CD4-positive, alpha-beta memory T cell (primary cell): ENCODE measurements at regions of chr18 and their contacts with region 1.

Region 1: DNA sequence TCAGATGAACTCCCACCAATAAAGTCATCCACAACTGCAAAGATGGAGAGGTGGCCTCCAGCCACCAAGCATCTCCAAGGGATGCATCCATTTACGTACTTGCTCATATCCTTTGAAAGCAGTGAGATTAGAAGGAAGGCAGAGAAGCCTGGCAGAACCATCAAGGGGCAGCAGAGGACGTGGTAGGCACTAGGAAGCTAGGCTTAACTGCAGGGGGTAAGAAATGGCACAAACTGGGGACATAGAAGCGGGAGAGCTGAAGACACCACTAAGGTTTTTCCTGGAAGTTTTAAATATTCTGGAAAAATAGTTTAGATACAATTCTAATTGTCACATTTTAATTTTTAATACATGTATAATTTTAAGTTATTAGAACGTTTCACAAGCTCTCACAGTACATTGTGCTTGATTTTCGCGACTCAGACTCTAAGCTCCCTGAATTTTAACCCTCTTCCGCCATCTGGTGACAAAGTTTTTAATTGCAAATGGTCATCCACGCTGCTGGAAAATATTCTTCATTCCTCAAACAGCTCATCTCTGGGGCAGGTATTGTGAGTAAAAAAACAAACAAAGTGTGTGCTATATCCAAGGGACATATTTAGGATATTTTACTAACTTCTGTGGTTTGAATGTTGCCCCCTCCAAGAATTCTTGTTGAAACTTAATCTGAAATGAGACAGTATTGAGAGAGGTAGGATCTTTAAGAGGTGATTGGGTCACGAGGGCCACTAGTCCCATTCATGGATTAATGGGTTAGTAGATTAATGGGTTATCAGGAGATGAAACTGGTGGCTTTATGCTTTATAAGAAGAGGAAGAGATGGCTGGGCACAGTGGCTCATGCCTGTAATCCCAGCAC is 1.6 kb upstream of the PSTPIP2 start:
- DNase-seq: peak; percentile 63 to 75 (median 68)
- H3K4me3 ChIP-seq: no peak overlapping the region
- H3K4me3 Mint-ChIP-seq: peak overlapping the region in 7 of 8 donors; percentile 22 to 89 (median 83)
- H3K27ac ChIP-seq: no peak overlapping the region
- H3K27ac Mint-ChIP-seq: peak overlapping the region in 2 of 7 donors; percentile 19 to 76
- H3K4me1 ChIP-seq: peaks cover 43% of the 10 kb centered on the region
- H3K4me1 Mint-ChIP-seq: peaks cover 25 to 42% (median 34%) of the 10 kb centered on the region in 4 donors
- H3K27me3 ChIP-seq: no peaks in the 10 kb centered on the region
- H3K27me3 Mint-ChIP-seq: no peaks in the 10 kb centered on the region

Region 2: DNA sequence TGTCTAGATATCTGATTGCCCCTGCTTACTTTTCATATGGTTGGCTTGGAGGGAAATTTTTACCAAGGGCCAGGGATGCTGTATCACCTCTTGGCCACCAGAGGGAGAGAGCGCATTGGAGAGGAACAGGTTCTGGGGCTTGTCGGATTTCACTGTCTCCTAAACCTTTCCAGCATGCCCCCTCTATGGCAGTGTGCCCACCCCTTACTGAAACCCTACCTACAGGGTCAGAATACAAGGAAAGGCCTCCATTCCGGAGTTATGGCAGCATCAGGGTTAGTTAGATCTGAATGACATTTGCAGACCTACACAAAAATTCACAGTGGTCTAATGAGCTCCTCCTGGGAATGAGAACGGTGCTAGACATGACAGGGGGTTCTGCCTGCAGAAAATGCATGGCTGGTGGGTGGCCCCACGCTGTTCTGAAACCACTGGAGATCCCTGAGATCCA is 452.6 kb before region 1 on chr18:
- CTCF ChIA-PET with region 1: interaction called, 3 read pairs
- POLR2A ChIA-PET with region 1: no interaction called
- intact Hi-C with region 1: loop called (anchors 1 kb)
- DNase-seq: peak in 4 of 5 donors; percentile 38 to 52 (median 46)
- H3K4me3 ChIP-seq: no peak overlapping the region
- H3K4me3 Mint-ChIP-seq: no peak overlapping the region
- H3K27ac ChIP-seq: no peak overlapping the region
- H3K27ac Mint-ChIP-seq: no peak overlapping the region
- H3K4me1 ChIP-seq: no peaks in the 10 kb centered on the region
- H3K4me1 Mint-ChIP-seq: no peaks in the 10 kb centered on the region
- H3K27me3 ChIP-seq: no peaks in the 10 kb centered on the region
- H3K27me3 Mint-ChIP-seq: peaks cover 4 to 7% of the 10 kb centered on the region in 2 donors

Region 3: GRCh38 chr18:45879681-45880655 is 193.7 kb before region 1 on chr18:
- CTCF ChIA-PET with region 1: interaction called, 9 read pairs
- POLR2A ChIA-PET with region 1: interaction called, 7 read pairs
- intact Hi-C with region 1: loop called (anchors 5 kb)
- DNase-seq: peak; percentile 64 to 74 (median 68)
- H3K4me3 ChIP-seq: no peak overlapping the region
- H3K4me3 Mint-ChIP-seq: peak overlapping the region in 1 of 8 donors; percentile 17
- H3K27ac ChIP-seq: no peak overlapping the region
- H3K27ac Mint-ChIP-seq: peak overlapping the region in 5 of 7 donors; percentile 30 to 82 (median 51)
- H3K4me1 ChIP-seq: peaks cover 16% of the 10 kb centered on the region
- H3K4me1 Mint-ChIP-seq: peaks cover 10 to 19% (median 16%) of the 10 kb centered on the region in 4 donors
- H3K27me3 ChIP-seq: no peaks in the 10 kb centered on the region
- H3K27me3 Mint-ChIP-seq: no peaks in the 10 kb centered on the region

Region 4: GRCh38 chr18:45935591-45936335 is 137.9 kb before region 1 on chr18:
- CTCF ChIA-PET with region 1: interaction called, 10 read pairs
- POLR2A ChIA-PET with region 1: no interaction called
- intact Hi-C with region 1: no loop called
- DNase-seq: no peak
- H3K4me3 ChIP-seq: no peak overlapping the region
- H3K4me3 Mint-ChIP-seq: no peak overlapping the region
- H3K27ac ChIP-seq: no peak overlapping the region
- H3K27ac Mint-ChIP-seq: peak overlapping the region in 1 of 7 donors; percentile 19
- H3K4me1 ChIP-seq: peaks cover 21% of the 10 kb centered on the region
- H3K4me1 Mint-ChIP-seq: peaks cover 19 to 25% (median 23%) of the 10 kb centered on the region in 4 donors
- H3K27me3 ChIP-seq: no peaks in the 10 kb centered on the region
- H3K27me3 Mint-ChIP-seq: no peaks in the 10 kb centered on the region

Region 5: GRCh38 chr18:45974088-45974536 is 99.6 kb before region 1 on chr18:
- CTCF ChIA-PET with region 1: interaction called, 47 read pairs
- POLR2A ChIA-PET with region 1: interaction called, 4 read pairs
- intact Hi-C with region 1: loop called (anchors 1 kb)
- DNase-seq: peak; percentile 60 to 80 (median 66)
- H3K4me3 ChIP-seq: no peak overlapping the region
- H3K4me3 Mint-ChIP-seq: peak overlapping the region in 3 of 8 donors; percentile 0 to 34 (median 1)
- H3K27ac ChIP-seq: no peak overlapping the region
- H3K27ac Mint-ChIP-seq: no peak overlapping the region
- H3K4me1 ChIP-seq: peaks cover 8% of the 10 kb centered on the region
- H3K4me1 Mint-ChIP-seq: peaks cover 8 to 18% (median 10%) of the 10 kb centered on the region in 4 donors
- H3K27me3 ChIP-seq: no peaks in the 10 kb centered on the region
- H3K27me3 Mint-ChIP-seq: no peaks in the 10 kb centered on the region

Region 6: DNA sequence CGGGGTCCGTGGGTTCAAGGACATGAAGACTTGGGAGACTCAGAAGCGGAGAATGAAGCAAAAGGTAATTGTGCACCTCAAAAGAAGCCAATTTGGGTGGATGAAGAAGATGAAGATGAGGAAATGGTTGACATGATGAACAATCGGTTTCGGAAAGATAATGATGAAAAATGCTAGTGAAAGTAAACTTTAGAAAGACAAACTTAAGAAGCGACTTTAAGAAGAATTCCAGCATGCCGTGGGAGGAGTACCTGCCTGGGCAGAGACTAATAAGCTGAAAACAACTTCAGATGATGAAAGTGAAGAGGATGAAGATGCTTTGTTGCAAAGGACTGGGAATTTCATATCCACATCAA is 45.2 kb before region 1 on chr18:
- CTCF ChIA-PET with region 1: interaction called, 10 read pairs
- POLR2A ChIA-PET with region 1: interaction called, 17 read pairs
- intact Hi-C with region 1: loop called (anchors 1 kb)
- DNase-seq: no peak
- H3K4me3 ChIP-seq: peak overlapping the region; percentile 20 to 85
- H3K4me3 Mint-ChIP-seq: peak overlapping the region; percentile 92 to 97 (median 92)
- H3K27ac ChIP-seq: peak overlapping the region; percentile 25
- H3K27ac Mint-ChIP-seq: peak overlapping the region; percentile 69 to 92 (median 87)
- H3K4me1 ChIP-seq: peaks cover 6% of the 10 kb centered on the region
- H3K4me1 Mint-ChIP-seq: peaks cover 4 to 12% (median 11%) of the 10 kb centered on the region in 4 donors
- H3K27me3 ChIP-seq: no peaks in the 10 kb centered on the region
- H3K27me3 Mint-ChIP-seq: no peaks in the 10 kb centered on the region

Region 7: GRCh38 chr18:46060359-46060841 is 13.3 kb before region 1 on chr18:
- CTCF ChIA-PET with region 1: interaction called, 30 read pairs
- POLR2A ChIA-PET with region 1: interaction called, 12 read pairs
- intact Hi-C with region 1: no loop called
- DNase-seq: no peak
- H3K4me3 ChIP-seq: no peak overlapping the region
- H3K4me3 Mint-ChIP-seq: no peak overlapping the region
- H3K27ac ChIP-seq: no peak overlapping the region
- H3K27ac Mint-ChIP-seq: peak overlapping the region in 1 of 7 donors; percentile 48
- H3K4me1 ChIP-seq: peaks cover 10% of the 10 kb centered on the region
- H3K4me1 Mint-ChIP-seq: peaks cover 18 to 34% (median 20%) of the 10 kb centered on the region in 4 donors
- H3K27me3 ChIP-seq: no peaks in the 10 kb centered on the region
- H3K27me3 Mint-ChIP-seq: no peaks in the 10 kb centered on the region

Region 8: DNA sequence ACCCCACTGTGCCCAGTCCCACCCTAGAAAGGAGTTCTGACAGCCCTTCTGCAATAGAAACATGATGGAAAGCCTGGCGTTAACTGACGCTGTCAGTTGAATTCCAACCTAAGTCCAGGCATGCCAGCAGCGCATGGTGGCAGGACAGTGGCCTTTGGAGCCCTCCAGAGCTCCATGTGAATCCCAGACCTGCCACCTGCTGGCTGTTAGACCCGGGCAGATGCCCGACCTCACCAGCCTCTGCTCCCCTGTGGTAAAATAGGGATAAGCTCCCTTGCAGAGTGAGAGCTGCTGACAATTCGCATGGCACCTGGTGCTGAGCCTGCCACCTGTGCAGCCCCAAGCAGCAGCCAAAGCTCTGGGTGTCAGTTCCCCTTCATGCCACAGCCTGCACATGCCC is 444.7 kb after region 1 on chr18:
- CTCF ChIA-PET with region 1: no interaction called
- POLR2A ChIA-PET with region 1: no interaction called
- intact Hi-C with region 1: no loop called
- DNase-seq: no peak
- H3K4me3 ChIP-seq: no peak overlapping the region
- H3K4me3 Mint-ChIP-seq: no peak overlapping the region
- H3K27ac ChIP-seq: no peak overlapping the region
- H3K27ac Mint-ChIP-seq: peak overlapping the region in 1 of 7 donors; percentile 17
- H3K4me1 ChIP-seq: no peaks in the 10 kb centered on the region
- H3K4me1 Mint-ChIP-seq: no peaks in the 10 kb centered on the region
- H3K27me3 ChIP-seq: no peaks in the 10 kb centered on the region
- H3K27me3 Mint-ChIP-seq: peaks cover 9 to 18% of the 10 kb centered on the region in 2 donors